Panc1 (cell line): ENCODE measurements at regions of chr17 and their contacts with region 1.

Region 1: GRCh38 chr17:19447085-19447583 is 36.1 kb downstream of the RNF112 start:
- DNase-seq: peak; percentile 69
- ATAC-seq: peak; percentile 89
- H3K4me3 ChIP-seq: no peak overlapping the region
- H3K27ac ChIP-seq: peak overlapping the region; percentile 78
- H3K4me1 ChIP-seq: peaks cover 3% of the 10 kb centered on the region; the same call in 1 of the 2 replicates
- H3K27me3 ChIP-seq: no peaks in the 10 kb centered on the region
- CTCF ChIP-seq: peak; percentile 87

Region 2: GRCh38 chr17:19362277-19363113 is 84.6 kb before region 1 on chr17 and contains the start of gene B9D1:
- CTCF ChIA-PET with region 1: interaction called, 8 read pairs
- POLR2A ChIA-PET with region 1: interaction called, 4 read pairs
- in situ Hi-C with region 1: no loop called
- intact Hi-C with region 1: loop called (anchors 2 kb)
- DNase-seq: peak; percentile 71
- ATAC-seq: peak; percentile 92
- H3K4me3 ChIP-seq: peak within 1 kb of the TSS; percentile 58 to 79
- H3K27ac ChIP-seq: peak within 1 kb of the TSS; percentile 81
- H3K4me1 ChIP-seq: peaks cover 5% of the 10 kb centered on the region
- H3K27me3 ChIP-seq: no peaks in the 10 kb centered on the region
- CTCF ChIP-seq: peak; percentile 96
- total RNA-seq, gene B9D1: 19.1 TPM

Region 3: GRCh38 chr17:19377602-19378392 is 69.3 kb before region 1 on chr17:
- CTCF ChIA-PET with region 1: no interaction called
- POLR2A ChIA-PET with region 1: no interaction called
- in situ Hi-C with region 1: no loop called
- intact Hi-C with region 1: loop called (anchors 5 kb)
- DNase-seq: peak; percentile 94
- ATAC-seq: peak; percentile 96
- H3K4me3 ChIP-seq: peak overlapping the region; percentile 78 to 83
- H3K27ac ChIP-seq: peak overlapping the region; percentile 93
- H3K4me1 ChIP-seq: no peaks in the 10 kb centered on the region; the same call in 1 of the 2 replicates
- H3K27me3 ChIP-seq: no peaks in the 10 kb centered on the region
- CTCF ChIP-seq: no peak